ENCODE measurements at regions of chr3 and their contacts with region 1.

Region 1: GRCh38 chr3:114721864-114722263 is 425.2 kb downstream of the ZBTB20 start:
- DNase-seq: no peak
- H3K4me3 Mint-ChIP-seq: no peak overlapping the region
- H3K27ac Mint-ChIP-seq: no peak overlapping the region
- H3K4me1 Mint-ChIP-seq: peaks cover 11% of the 10 kb centered on the region
- H3K27me3 Mint-ChIP-seq: no peaks in the 10 kb centered on the region

Region 2: GRCh38 chr3:114194750-114195149 is 527.1 kb before region 1 on chr3:
- intact Hi-C with region 1: no loop called
- DNase-seq: no peak
- H3K4me3 Mint-ChIP-seq: no peak overlapping the region
- H3K27ac Mint-ChIP-seq: no peak overlapping the region
- H3K4me1 Mint-ChIP-seq: no peaks in the 10 kb centered on the region
- H3K27me3 Mint-ChIP-seq: no peaks in the 10 kb centered on the region

Region 3: GRCh38 chr3:114706591-114707232 is 15.2 kb before region 1 on chr3:
- intact Hi-C with region 1: loop called (anchors 2 kb)
- DNase-seq: peak; percentile 56
- H3K4me3 Mint-ChIP-seq: no peak overlapping the region
- H3K27ac Mint-ChIP-seq: no peak overlapping the region
- H3K4me1 Mint-ChIP-seq: peaks cover 4% of the 10 kb centered on the region
- H3K27me3 Mint-ChIP-seq: no peaks in the 10 kb centered on the region

Measured in activated CD4-positive, alpha-beta T cell treated with anti-CD3 and anti-CD28 coated beads, Interleukin-2, amount 10 ng/mL, durations not matched to agents 24 days and 14 days (primary cell).